ENCODE measurements at regions of chr9 and their contacts with region 1.

Region 1: GRCh38 chr9:74496819-74497747 is at the start of gene RORB:
- DNase-seq: peak; percentile 28
- H3K4me3 Mint-ChIP-seq: peak within 1 kb of the TSS; percentile 86
- H3K27ac Mint-ChIP-seq: peak within 1 kb of the TSS; percentile 52
- H3K4me1 Mint-ChIP-seq: peaks cover 35% of the 10 kb centered on the region
- H3K27me3 Mint-ChIP-seq: peaks cover 59% of the 10 kb centered on the region
- total RNA-seq, gene RORB: 0.05 TPM in 1 of 2 replicates, not detected in the other

Region 2: DNA sequence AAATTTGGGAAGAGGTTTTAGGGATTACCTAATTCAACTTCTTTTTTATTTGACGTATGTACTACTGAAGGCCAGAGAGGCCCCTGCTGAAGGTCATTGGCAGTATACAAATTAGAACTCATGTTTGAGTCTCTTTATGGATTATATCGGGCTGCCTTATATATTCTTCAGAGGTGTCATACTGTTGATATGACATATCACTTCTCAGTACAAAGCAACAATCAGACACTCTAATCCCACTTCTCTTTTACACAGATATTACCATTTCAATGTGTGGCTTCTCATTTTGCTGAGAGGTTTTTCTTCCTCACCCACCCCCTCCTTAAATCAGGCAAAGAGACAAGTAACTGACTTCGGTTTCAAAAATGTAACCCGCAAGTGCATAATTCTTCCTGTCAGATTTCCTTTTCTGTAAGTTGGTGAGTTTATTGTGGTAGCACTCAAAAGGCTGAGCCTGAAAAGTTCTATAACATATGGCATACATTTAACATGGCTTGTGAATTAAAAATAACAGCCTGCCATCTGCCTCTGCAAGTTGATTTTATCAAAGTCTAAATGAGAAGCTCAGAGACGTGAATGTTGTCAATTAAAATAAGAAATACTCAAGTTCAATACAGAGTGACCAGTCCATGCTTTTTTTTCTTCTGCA is 163.6 kb before region 1 on chr9:
- intact Hi-C with region 1: loop called (anchors 10 kb)
- DNase-seq: no peak
- H3K4me3 Mint-ChIP-seq: peak overlapping the region; percentile 7
- H3K27ac Mint-ChIP-seq: peak overlapping the region; percentile 38
- H3K4me1 Mint-ChIP-seq: peaks cover 48% of the 10 kb centered on the region
- H3K27me3 Mint-ChIP-seq: peaks cover 2% of the 10 kb centered on the region

Region 3: GRCh38 chr9:74511333-74511732 is 14.2 kb after region 1 on chr9:
- intact Hi-C with region 1: loop called (anchors 2 kb)
- DNase-seq: no peak
- H3K4me3 Mint-ChIP-seq: no peak overlapping the region
- H3K27ac Mint-ChIP-seq: no peak overlapping the region
- H3K4me1 Mint-ChIP-seq: no peaks in the 10 kb centered on the region
- H3K27me3 Mint-ChIP-seq: peaks cover under 1% of the 10 kb centered on the region

Region 4: GRCh38 chr9:74630228-74630627 is 133.1 kb after region 1 on chr9:
- intact Hi-C with region 1: no loop called
- DNase-seq: no peak
- H3K4me3 Mint-ChIP-seq: no peak overlapping the region
- H3K27ac Mint-ChIP-seq: no peak overlapping the region
- H3K4me1 Mint-ChIP-seq: no peaks in the 10 kb centered on the region
- H3K27me3 Mint-ChIP-seq: no peaks in the 10 kb centered on the region